ENCODE measurements at regions of chr14 and their contacts with region 1.

Region 1: DNA sequence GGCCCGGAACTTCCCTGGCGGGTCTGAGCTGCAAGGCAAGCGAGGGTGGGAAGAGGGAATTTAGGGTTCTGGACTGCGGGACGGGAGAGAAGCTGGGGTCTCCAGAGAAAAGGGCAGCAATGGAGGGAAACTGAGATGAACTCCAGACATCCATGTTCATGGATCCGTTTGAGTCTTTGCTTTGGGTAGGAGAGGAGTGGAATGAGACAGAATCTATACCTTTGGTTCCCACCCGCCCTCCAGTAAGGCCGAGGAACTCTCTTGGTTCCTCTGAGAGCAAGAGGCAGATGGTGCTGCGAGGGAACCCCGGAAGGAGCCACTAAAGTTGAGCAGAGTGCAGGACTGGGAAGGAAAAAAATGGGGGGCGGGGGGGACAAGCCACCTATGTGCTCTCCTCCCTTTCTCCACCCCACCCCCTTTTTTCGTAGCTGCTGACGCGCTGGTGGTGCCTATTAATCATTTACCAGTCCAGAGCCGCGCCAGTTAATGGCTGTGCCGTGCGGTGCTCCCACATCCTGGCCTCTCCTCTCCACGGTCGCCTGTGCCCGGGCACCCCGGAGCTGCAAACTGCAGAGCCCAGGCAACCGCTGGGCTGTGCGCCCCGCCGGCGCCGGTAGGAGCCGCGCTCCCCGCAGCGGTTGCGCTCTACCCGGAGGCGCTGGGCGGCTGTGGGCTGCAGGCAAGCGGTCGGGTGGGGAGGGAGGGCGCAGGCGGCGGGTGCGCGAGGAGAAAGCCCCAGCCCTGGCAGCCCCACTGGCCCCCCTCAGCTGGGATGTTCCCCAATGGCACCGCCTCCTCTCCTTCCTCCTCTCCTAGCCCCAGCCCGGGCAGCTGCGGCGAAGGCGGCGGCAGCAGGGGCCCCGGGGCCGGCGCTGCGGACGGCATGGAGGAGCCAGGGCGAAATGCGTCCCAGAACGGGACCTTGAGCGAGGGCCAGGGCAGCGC is 1.2 kb downstream of the SSTR1 start:
- DNase-seq: no peak
- H3K4me3 Mint-ChIP-seq: no peak overlapping the region
- H3K27ac Mint-ChIP-seq: no peak overlapping the region
- H3K4me1 Mint-ChIP-seq: peaks cover 2% of the 10 kb centered on the region
- H3K27me3 Mint-ChIP-seq: peaks cover 67% of the 10 kb centered on the region

Region 2: DNA sequence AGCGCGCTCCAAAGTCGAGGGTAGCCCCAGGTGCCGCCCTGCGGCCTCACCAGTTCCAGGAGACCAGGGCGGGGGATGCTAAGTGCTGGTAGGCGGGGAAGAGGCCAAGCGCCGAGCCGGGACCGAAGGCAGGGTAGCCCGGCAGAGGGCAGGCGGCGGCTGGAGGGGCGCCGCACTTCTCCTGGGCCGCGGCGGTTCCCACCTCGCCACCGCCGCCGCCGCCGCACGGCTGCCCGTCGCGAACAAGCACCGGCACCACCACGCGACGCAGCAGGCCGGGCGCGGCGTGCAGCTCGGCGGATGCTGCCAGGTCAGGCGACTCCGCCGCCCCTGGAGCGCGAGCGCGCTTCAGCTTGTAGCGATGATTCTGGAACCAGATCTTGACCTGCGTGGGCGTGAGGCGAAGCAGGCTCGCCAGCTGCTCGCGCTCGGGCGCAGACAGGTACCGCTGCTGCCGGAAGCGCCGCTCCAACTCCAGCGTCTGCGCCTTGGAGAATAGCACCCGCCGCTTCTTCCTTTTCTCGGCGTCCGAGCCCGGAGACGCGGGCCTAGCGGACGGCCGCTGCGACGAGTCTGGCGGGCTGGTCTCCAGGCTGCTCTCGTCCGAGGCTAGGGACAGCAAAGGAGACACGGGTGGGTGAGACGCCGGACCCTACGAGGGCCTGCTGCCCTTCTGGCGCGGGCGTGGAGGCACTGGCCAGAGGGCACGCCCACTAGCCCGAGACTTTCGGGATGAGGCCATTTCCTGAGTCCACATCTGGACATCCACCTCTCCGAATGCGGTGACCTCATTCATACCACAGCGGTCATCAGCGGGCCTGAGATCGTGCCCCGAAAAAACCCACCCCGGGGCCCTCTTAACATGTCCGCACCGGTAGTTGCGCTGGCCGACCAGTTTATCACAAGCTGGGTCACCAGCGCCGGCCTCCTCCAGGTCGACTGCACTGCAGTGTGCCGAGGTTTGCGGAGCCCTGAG is 1627.7 kb before region 1 on chr14:
- intact Hi-C with region 1: loop called (anchors 10 kb)
- DNase-seq: no peak
- H3K4me3 Mint-ChIP-seq: no peak overlapping the region
- H3K27ac Mint-ChIP-seq: no peak overlapping the region
- H3K4me1 Mint-ChIP-seq: no peaks in the 10 kb centered on the region
- H3K27me3 Mint-ChIP-seq: peaks cover 61% of the 10 kb centered on the region

Region 3: GRCh38 chr14:36655963-36656686 is 1552.8 kb before region 1 on chr14:
- intact Hi-C with region 1: loop called (anchors 5 kb)
- DNase-seq: no peak
- H3K4me3 Mint-ChIP-seq: no peak overlapping the region
- H3K27ac Mint-ChIP-seq: no peak overlapping the region
- H3K4me1 Mint-ChIP-seq: peaks cover 4% of the 10 kb centered on the region
- H3K27me3 Mint-ChIP-seq: peaks cover 91% of the 10 kb centered on the region

Region 4: DNA sequence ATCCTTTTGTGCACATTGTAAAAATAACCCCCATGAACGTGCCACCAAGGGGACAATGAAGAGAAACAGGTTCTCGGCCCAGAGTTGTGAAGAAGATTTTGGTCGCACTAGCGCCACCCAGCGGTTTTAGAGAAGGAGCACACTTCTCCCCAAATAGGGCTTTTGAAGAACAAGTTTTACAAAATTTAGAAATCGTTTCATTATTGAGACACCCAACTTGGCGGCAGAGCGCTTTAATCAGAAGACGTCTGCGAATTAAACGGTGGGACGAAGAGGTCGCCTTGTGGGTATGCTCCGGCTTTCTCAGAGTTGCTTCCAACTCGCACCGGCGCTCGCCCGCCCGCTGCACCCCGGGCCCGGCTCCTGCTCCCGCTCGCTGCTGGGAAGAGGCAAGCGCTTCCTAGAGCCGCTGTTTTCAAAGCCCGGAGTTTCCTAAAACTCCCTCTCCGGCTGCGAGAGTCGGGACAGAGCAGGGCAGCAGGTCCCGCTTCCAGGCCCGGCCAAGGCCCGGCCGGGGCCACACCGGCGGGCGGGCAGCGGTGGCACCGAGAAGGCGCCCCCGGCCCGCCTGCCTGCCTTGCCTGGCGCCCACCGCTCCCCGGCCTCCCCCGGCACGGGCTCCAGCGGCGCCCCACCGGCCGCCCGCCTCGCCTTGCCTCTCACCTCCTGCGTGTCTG is 614.5 kb before region 1 on chr14:
- intact Hi-C with region 1: loop called (anchors 5 kb)
- DNase-seq: no peak
- H3K4me3 Mint-ChIP-seq: peak overlapping the region; percentile 65
- H3K27ac Mint-ChIP-seq: peak overlapping the region; percentile 55
- H3K4me1 Mint-ChIP-seq: peaks cover 7% of the 10 kb centered on the region
- H3K27me3 Mint-ChIP-seq: peaks cover 74% of the 10 kb centered on the region

Region 5: DNA sequence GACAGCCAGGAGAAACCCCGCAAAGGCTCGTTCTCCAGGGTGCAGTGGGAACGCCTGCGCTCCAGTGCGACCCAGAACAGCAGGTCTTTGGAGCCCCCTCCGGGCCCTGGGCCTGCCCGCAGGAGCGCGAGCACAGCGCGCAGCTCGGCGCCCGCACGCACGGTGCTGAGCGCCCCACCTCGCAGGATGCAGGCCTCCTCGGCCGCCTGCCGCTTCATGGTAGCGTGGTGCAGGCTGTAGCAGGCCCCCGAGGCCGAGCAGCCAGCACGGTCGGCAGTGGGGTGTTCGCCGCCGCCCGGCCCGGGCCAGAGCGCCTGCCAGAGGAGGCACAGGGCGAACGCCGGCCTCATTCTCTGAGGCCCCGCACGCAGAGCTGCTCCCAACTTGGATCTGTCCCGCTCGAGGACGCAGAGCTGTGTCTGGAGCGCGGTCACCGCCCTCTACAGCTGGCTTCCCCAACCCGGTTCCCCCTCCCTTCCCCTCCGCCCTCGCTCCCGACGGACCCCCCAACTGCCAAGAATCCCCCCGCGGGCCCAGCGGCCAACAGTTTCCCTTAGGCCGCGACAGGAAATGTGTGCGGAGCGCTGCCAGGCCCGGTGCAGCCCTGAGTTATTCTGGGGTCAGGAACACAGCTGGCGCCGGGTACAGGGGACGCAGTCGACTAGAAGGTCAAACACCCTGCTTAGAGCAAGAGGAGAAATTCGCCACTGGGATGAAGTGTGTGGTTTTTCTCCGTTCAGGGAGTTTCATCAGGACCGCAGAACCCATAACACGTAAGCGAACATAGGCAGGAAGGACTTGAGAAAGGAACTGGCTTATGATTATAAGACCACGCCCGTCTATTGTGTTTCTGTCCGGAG is 47.0 kb after region 1 on chr14 and contains the start of gene CLEC14A:
- intact Hi-C with region 1: loop called (anchors 2 kb)
- DNase-seq: peak; percentile 9
- H3K4me3 Mint-ChIP-seq: no peak within 1 kb of the TSS
- H3K27ac Mint-ChIP-seq: no peak within 1 kb of the TSS
- H3K4me1 Mint-ChIP-seq: peaks cover 6% of the 10 kb centered on the region
- H3K27me3 Mint-ChIP-seq: peaks cover 34% of the 10 kb centered on the region
- total RNA-seq, gene CLEC14A: not detected in 2 replicates